ENCODE measurements at regions of chr1 and their contacts with region 1.

Region 1: GRCh38 chr1:174743654-174744561 is 255.8 kb upstream of the CACYBP start:
- DNase-seq: no peak
- H3K4me3 Mint-ChIP-seq: no peak overlapping the region
- H3K27ac Mint-ChIP-seq: no peak overlapping the region
- H3K4me1 Mint-ChIP-seq: no peaks in the 10 kb centered on the region
- H3K27me3 Mint-ChIP-seq: peaks cover 3% of the 10 kb centered on the region

Region 2: GRCh38 chr1:174258148-174258550 is 485.8 kb before region 1 on chr1:
- intact Hi-C with region 1: loop called (anchors 1 kb)
- DNase-seq: peak; percentile 81
- H3K4me3 Mint-ChIP-seq: no peak overlapping the region
- H3K27ac Mint-ChIP-seq: no peak overlapping the region
- H3K4me1 Mint-ChIP-seq: no peaks in the 10 kb centered on the region
- H3K27me3 Mint-ChIP-seq: no peaks in the 10 kb centered on the region

Region 3: GRCh38 chr1:174626031-174627025 is 117.6 kb before region 1 on chr1:
- intact Hi-C with region 1: no loop called
- DNase-seq: no peak
- H3K4me3 Mint-ChIP-seq: no peak overlapping the region
- H3K27ac Mint-ChIP-seq: no peak overlapping the region
- H3K4me1 Mint-ChIP-seq: no peaks in the 10 kb centered on the region
- H3K27me3 Mint-ChIP-seq: no peaks in the 10 kb centered on the region

Region 4: GRCh38 chr1:174964261-174964971 is 220.5 kb after region 1 on chr1:
- intact Hi-C with region 1: no loop called
- DNase-seq: peak; percentile 85
- H3K4me3 Mint-ChIP-seq: peak overlapping the region; percentile 84
- H3K27ac Mint-ChIP-seq: peak overlapping the region; percentile 89
- H3K4me1 Mint-ChIP-seq: peaks cover 49% of the 10 kb centered on the region
- H3K27me3 Mint-ChIP-seq: no peaks in the 10 kb centered on the region